A673 (cell line): ENCODE measurements at regions of chr17 and their contacts with region 1.

Region 1: DNA sequence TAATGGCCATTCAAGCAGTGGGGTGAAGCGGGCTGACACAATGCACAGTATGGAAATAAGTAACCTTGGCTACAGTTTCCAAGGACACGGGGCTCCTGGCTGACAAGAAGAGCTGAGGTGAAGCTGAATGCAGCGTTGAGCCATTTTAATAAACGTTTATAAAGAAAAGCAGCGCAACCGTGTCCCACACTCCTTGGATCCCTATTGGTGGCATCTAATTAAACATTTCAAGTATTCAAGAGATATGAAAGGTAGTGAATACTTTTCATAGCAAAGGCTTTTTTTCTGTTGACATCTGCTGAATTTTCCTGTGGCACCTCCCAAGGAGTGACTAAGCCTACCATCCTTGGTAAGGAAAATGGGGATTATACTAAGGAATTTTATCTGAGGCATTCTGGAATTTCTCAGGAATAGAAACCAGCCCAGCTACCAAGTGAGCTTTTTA is 26.5 kb downstream of the DUSP14 start:
- DNase-seq: no peak
- H3K4me3 ChIP-seq: no peak overlapping the region
- H3K27ac ChIP-seq: no peak overlapping the region
- H3K4me1 ChIP-seq: no peaks in the 10 kb centered on the region
- H3K27me3 ChIP-seq: no peaks in the 10 kb centered on the region
- CTCF ChIP-seq: no peak

Region 2: DNA sequence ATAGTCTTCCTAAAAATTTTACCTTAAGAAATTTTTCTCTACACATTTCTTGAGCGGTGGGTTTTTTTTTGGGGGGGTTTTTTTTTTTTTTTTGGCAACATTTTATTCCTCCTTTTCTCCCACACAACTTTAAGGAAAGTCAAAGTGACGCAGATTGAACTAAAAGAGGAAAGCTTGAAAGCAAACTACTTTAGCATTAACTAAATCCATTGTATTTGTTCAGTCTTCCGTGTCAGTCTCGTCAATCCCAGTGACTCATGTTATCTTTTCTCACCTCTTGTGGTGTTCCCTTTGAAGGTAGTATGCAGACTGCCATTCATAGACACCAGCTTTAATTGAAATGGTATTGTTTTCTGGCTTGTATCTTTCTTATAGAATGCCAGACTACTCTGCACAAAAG is 70.1 kb before region 1 on chr17:
- CTCF ChIA-PET with region 1: no interaction called
- POLR2A ChIA-PET with region 1: interaction called, 15 read pairs
- intact Hi-C with region 1: no loop called
- DNase-seq: peak; percentile 47
- H3K4me3 ChIP-seq: no peak overlapping the region
- H3K27ac ChIP-seq: no peak overlapping the region
- H3K4me1 ChIP-seq: no peaks in the 10 kb centered on the region
- H3K27me3 ChIP-seq: no peaks in the 10 kb centered on the region
- CTCF ChIP-seq: no peak

Region 3: DNA sequence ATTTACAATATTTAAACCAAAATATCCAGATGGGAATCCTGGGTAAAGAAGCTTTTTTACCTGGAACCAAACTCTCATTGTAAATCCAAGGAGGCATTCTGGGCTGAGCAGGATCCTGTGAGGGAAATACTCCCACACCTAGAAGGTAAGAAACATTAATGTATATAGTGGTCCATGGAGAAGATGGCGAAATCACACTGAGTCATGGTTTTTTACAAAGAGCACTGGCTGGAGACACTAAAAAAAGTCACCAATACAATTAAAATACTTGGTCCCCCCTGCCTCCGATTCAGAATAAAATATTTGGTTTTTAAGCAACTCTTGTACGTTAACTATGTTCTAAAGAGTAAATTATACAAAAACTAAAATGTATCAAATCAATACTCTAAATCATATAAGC is 60.1 kb after region 1 on chr17:
- CTCF ChIA-PET with region 1: no interaction called
- POLR2A ChIA-PET with region 1: no interaction called
- intact Hi-C with region 1: no loop called
- DNase-seq: no peak
- H3K4me3 ChIP-seq: no peak overlapping the region
- H3K27ac ChIP-seq: no peak overlapping the region
- H3K4me1 ChIP-seq: no peaks in the 10 kb centered on the region
- H3K27me3 ChIP-seq: no peaks in the 10 kb centered on the region
- CTCF ChIP-seq: no peak